CD4-positive, alpha-beta T cell (primary cell): ENCODE measurements at regions of chr2 and their contacts with region 1.

Region 1: GRCh38 chr2:205133544-205133943 is 548.8 kb upstream of the NRP2 start:
- DNase-seq: no peak
- ATAC-seq: no peak
- H3K4me3 ChIP-seq: no peak overlapping the region
- H3K4me3 Mint-ChIP-seq: no peak overlapping the region
- H3K27ac ChIP-seq: no peak overlapping the region
- H3K27ac Mint-ChIP-seq: no peak overlapping the region
- H3K4me1 ChIP-seq: peaks cover 9% of the 10 kb centered on the region
- H3K4me1 Mint-ChIP-seq: peaks cover 22% of the 10 kb centered on the region
- H3K27me3 ChIP-seq: no peaks in the 10 kb centered on the region
- H3K27me3 Mint-ChIP-seq: no peaks in the 10 kb centered on the region
- CTCF ChIP-seq: no peak

Region 2: GRCh38 chr2:204871231-204871953 is 262.2 kb before region 1 on chr2:
- CTCF ChIA-PET with region 1: interaction called, 6 read pairs
- POLR2A ChIA-PET with region 1: interaction called, 7 read pairs
- intact Hi-C with region 1: loop called (anchors 2 to 5 kb)
- DNase-seq: peak in 3 of 14 experiments; percentile 60 to 71 (median 61)
- ATAC-seq: peak; percentile 59
- H3K4me3 ChIP-seq: no peak overlapping the region
- H3K4me3 Mint-ChIP-seq: no peak overlapping the region
- H3K27ac ChIP-seq: no peak overlapping the region
- H3K27ac Mint-ChIP-seq: no peak overlapping the region
- H3K4me1 ChIP-seq: peaks cover 3% of the 10 kb centered on the region
- H3K4me1 Mint-ChIP-seq: peaks cover 52% of the 10 kb centered on the region
- H3K27me3 ChIP-seq: no peaks in the 10 kb centered on the region
- H3K27me3 Mint-ChIP-seq: no peaks in the 10 kb centered on the region
- CTCF ChIP-seq: peak; percentile 84

Region 3: DNA sequence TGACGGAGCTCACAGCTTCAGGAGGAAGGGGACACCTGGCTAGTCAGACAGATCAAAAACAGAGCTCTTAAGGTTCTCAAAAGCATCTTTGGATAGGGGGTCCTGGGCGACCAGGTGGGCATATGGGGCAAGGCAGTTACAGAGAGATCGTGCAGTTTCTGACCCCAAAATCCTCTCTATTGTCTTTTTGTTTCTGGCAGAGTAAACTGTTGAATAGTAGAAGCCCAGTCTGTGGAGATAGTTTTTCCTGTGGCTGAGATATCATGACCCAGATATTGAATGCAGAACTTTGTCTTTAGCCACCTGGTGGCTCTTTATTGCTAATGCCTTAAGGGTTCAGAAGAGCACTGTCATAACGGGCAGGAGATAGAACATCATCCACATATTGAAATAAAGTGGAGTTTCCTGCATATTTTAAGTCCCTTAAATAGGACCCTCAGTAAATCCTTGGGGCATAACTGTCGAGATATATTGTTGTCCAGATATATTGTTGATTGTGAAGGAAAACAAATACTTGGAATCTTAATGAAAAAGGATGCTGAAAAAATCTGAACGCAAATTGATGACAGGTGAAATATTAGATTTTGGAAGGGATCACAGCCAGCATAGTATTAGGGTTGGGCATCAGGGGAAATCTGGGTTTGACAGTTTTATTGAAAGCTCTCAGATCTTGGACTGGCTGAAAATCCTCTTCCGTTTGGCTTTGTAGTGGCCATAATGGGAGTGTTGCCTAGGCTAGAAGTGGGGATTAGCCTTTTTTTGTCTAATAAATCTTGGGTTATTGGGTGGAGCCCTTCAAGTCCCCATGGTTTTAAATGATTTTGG is 1126.9 kb after region 1 on chr2:
- CTCF ChIA-PET with region 1: no interaction called
- POLR2A ChIA-PET with region 1: no interaction called
- intact Hi-C with region 1: no loop called
- DNase-seq: peak in 1 of 14 experiments; percentile 28
- ATAC-seq: peak; percentile 60
- H3K4me3 ChIP-seq: no peak overlapping the region
- H3K4me3 Mint-ChIP-seq: no peak overlapping the region
- H3K27ac ChIP-seq: no peak overlapping the region
- H3K27ac Mint-ChIP-seq: no peak overlapping the region
- H3K4me1 ChIP-seq: peaks cover 3% of the 10 kb centered on the region
- H3K4me1 Mint-ChIP-seq: no peaks in the 10 kb centered on the region
- H3K27me3 ChIP-seq: peaks cover 70 to 73% of the 10 kb centered on the region in 2 experiments
- H3K27me3 Mint-ChIP-seq: peaks cover 82% of the 10 kb centered on the region
- CTCF ChIP-seq: no peak